Heart left ventricle (tissue), 16 donors: ENCODE measurements at regions of chr16 and their contacts with region 1.

Region 1: GRCh38 chr16:70470927-70471341 is 16.5 kb downstream of the FCSK start:
- DNase-seq: peak in 3 of 5 donors; percentile 56 to 69 (median 65)
- ATAC-seq: peak; percentile 56 to 81 (median 69)
- H3K4me3 ChIP-seq: no peak overlapping the region
- H3K27ac ChIP-seq: no peak overlapping the region
- H3K4me1 ChIP-seq: peaks cover 0 to 5% (median 0%) of the 10 kb centered on the region in 12 donors
- H3K27me3 ChIP-seq: no peaks in the 10 kb centered on the region
- CTCF ChIP-seq: peak in 11 of 12 donors; percentile 11 to 58 (median 45)
- POLR2A ChIP-seq: no peak

Region 2: DNA sequence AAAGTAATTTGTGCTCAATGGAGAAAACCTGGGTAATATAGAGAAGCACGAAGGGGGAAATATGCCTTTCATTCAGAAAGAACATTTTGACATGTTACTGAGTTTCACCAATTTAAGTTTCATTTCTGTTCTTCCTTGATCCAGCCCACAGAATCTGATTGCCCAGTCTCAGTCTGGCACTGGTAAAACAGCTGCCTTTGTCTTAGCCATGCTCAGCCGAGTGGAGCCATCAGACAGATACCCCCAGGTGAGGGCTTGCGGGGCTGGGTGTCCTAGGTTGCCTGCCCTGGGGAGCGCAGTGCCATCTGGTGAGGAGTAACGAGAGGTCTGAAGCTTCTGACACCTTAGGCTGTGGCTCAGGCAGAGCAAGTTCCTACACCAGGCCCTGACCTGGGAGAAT is 106.5 kb before region 1 on chr16:
- intact Hi-C with region 1: loop called in 1 of 10 experiments (anchors 5 kb)
- DNase-seq: no peak
- ATAC-seq: no peak
- H3K4me3 ChIP-seq: no peak overlapping the region
- H3K27ac ChIP-seq: no peak overlapping the region
- H3K4me1 ChIP-seq: no peaks in the 10 kb centered on the region
- H3K27me3 ChIP-seq: no peaks in the 10 kb centered on the region
- CTCF ChIP-seq: no peak
- POLR2A ChIP-seq: no peak

Region 3: GRCh38 chr16:70375636-70376611 is 95.0 kb before region 1 on chr16:
- intact Hi-C with region 1: loop called in 2 of 10 experiments (anchors 5 kb)
- DNase-seq: no peak
- ATAC-seq: no peak
- H3K4me3 ChIP-seq: no peak overlapping the region
- H3K27ac ChIP-seq: no peak overlapping the region
- H3K4me1 ChIP-seq: peaks cover 0 to 20% (median 13%) of the 10 kb centered on the region in 12 donors
- H3K27me3 ChIP-seq: no peaks in the 10 kb centered on the region
- CTCF ChIP-seq: no peak
- POLR2A ChIP-seq: no peak

Region 4: GRCh38 chr16:70490261-70490803 is 19.4 kb after region 1 on chr16:
- intact Hi-C with region 1: no loop called
- DNase-seq: peak in 1 of 5 donors; percentile 42
- ATAC-seq: peak in 1 of 4 donors; percentile 62
- H3K4me3 ChIP-seq: no peak overlapping the region
- H3K27ac ChIP-seq: no peak overlapping the region
- H3K4me1 ChIP-seq: peaks cover 0 to 14% (median 0%) of the 10 kb centered on the region in 12 donors
- H3K27me3 ChIP-seq: no peaks in the 10 kb centered on the region
- CTCF ChIP-seq: no peak
- POLR2A ChIP-seq: no peak

Region 5: GRCh38 chr16:70523743-70524400 is 52.9 kb after region 1 on chr16 and contains the start of gene SF3B3:
- intact Hi-C with region 1: no loop called
- DNase-seq: peak; percentile 74 to 84 (median 77)
- ATAC-seq: peak; percentile 78 to 88 (median 86)
- H3K4me3 ChIP-seq: peak within 1 kb of the TSS; percentile 58 to 99 (median 84)
- H3K27ac ChIP-seq: peak within 1 kb of the TSS; percentile 67 to 94 (median 87)
- H3K4me1 ChIP-seq: peaks cover 3 to 67% (median 36%) of the 10 kb centered on the region in 12 donors
- H3K27me3 ChIP-seq: no peaks in the 10 kb centered on the region
- CTCF ChIP-seq: no peak
- POLR2A ChIP-seq: peak in 1 of 2 donors; percentile 25
- total RNA-seq, gene SF3B3: 83.9 to 198 (median 158) TPM